Left cardiac atrium (tissue), 4 donors: ENCODE measurements at regions of chr13 and their contacts with region 1.

Region 1: GRCh38 chr13:48303359-48304142 is at the start of gene RB1:
- DNase-seq: peak; percentile 97
- ATAC-seq: peak; percentile 95 to 97
- total RNA-seq, gene RB1: 24.5 to 25.2 TPM

Region 2: GRCh38 chr13:48126944-48127830 is 176.4 kb before region 1 on chr13:
- intact Hi-C with region 1: loop called in 1 of 2 experiments (anchors 10 kb)
- DNase-seq: peak; percentile 58
- ATAC-seq: peak; percentile 85 to 86